Endothelial cell of umbilical vein (primary cell): ENCODE measurements at regions of chr12 and their contacts with region 1.

Region 1: GRCh38 chr12:123232807-123233543 is at the starts of genes MPHOSPH9 and MTRFR:
- DNase-seq: peak; percentile 100
- H3K4me3 ChIP-seq: peak within 1 kb of the TSS; percentile 65 to 100 (median 99)
- H3K27ac ChIP-seq: peak within 1 kb of the TSS; percentile 86
- H3K4me1 ChIP-seq: peaks cover 21% of the 10 kb centered on the region
- H3K27me3 ChIP-seq: no peaks in the 10 kb centered on the region
- CTCF ChIP-seq: no peak
- POLR2A ChIP-seq: peak; percentile 99
- total RNA-seq, gene MPHOSPH9: 42.4 and 55.6 TPM in 2 replicates
- total RNA-seq, gene MTRFR: 12.0 and 14.4 TPM in 2 replicates

Region 2: GRCh38 chr12:122752464-122753318 is 480.3 kb before region 1 on chr12 and contains the start of gene DENR:
- CTCF ChIA-PET with region 1: no interaction called
- POLR2A ChIA-PET with region 1: no interaction called
- dilution Hi-C with region 1: no loop called
- intact Hi-C with region 1: loop called (anchors 2 kb)
- DNase-seq: peak; percentile 98
- H3K4me3 ChIP-seq: peak within 1 kb of the TSS; percentile 66 to 87 (median 77)
- H3K27ac ChIP-seq: peak within 1 kb of the TSS; percentile 74
- H3K4me1 ChIP-seq: peaks cover 11% of the 10 kb centered on the region
- H3K27me3 ChIP-seq: no peaks in the 10 kb centered on the region
- CTCF ChIP-seq: peak; percentile 87 to 90
- POLR2A ChIP-seq: peak; percentile 98
- total RNA-seq, gene DENR: 66.5 and 70.3 TPM in 2 replicates

Region 3: GRCh38 chr12:122865268-122866231 is 367.4 kb before region 1 on chr12:
- CTCF ChIA-PET with region 1: interaction called, 22 read pairs
- POLR2A ChIA-PET with region 1: interaction called, 5 read pairs
- dilution Hi-C with region 1: no loop called
- intact Hi-C with region 1: loop called (anchors 5 kb)
- DNase-seq: peak; percentile 40
- H3K4me3 ChIP-seq: no peak overlapping the region
- H3K27ac ChIP-seq: no peak overlapping the region
- H3K4me1 ChIP-seq: peaks cover 4% of the 10 kb centered on the region
- H3K27me3 ChIP-seq: no peaks in the 10 kb centered on the region
- CTCF ChIP-seq: peak; percentile 54 to 73
- POLR2A ChIP-seq: no peak

Region 4: GRCh38 chr12:122951979-122952892 is 280.7 kb before region 1 on chr12:
- CTCF ChIA-PET with region 1: interaction called, 19 read pairs
- POLR2A ChIA-PET with region 1: interaction called, 6 read pairs
- dilution Hi-C with region 1: no loop called
- intact Hi-C with region 1: loop called (anchors 2 kb)
- DNase-seq: peak; percentile 72
- H3K4me3 ChIP-seq: no peak overlapping the region
- H3K27ac ChIP-seq: peak overlapping the region; percentile 51
- H3K4me1 ChIP-seq: peaks cover 18% of the 10 kb centered on the region
- H3K27me3 ChIP-seq: no peaks in the 10 kb centered on the region
- CTCF ChIP-seq: peak; percentile 91 to 92
- POLR2A ChIP-seq: no peak

Region 5: DNA sequence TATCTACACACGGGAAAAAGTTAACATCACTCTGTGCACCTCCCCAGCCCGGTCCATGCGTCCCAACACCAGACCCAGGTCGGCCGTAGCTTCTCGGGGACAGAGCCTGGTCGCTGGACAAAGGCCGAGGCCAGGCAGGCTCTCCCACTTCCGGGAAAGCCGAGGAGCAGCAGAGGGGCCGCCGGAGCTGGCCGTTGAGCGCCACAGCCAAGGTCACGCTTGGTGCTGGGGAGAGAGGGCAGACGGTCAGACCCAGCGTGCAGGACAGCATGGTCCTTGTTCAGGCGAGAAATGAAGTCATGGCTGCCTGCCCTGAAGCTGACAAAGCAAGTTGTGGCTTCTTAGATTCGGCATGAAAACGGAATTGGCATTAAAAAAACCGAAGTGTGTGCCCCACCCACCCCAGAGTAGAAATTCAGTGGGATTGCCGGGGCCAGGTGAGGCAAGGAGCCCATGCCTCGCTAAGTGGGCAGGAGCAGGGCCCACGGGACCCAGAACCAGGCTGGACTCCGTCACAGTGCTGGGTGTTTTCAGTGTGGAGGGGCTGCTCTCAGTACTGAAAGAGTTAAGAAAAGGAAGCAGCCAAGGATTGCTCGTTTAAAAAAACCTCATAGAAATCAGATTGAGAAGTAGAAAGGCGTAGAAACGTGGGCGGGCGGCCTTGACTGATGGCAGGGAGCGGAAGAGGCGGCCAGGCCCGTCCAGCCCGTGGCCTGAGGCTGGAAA is 248.2 kb before region 1 on chr12:
- CTCF ChIA-PET with region 1: interaction called, 21 read pairs
- POLR2A ChIA-PET with region 1: interaction called, 7 read pairs
- dilution Hi-C with region 1: no loop called
- intact Hi-C with region 1: no loop called
- DNase-seq: no peak
- H3K4me3 ChIP-seq: no peak overlapping the region
- H3K27ac ChIP-seq: no peak overlapping the region
- H3K4me1 ChIP-seq: peaks cover 30% of the 10 kb centered on the region
- H3K27me3 ChIP-seq: no peaks in the 10 kb centered on the region
- CTCF ChIP-seq: no peak
- POLR2A ChIP-seq: no peak

Region 6: DNA sequence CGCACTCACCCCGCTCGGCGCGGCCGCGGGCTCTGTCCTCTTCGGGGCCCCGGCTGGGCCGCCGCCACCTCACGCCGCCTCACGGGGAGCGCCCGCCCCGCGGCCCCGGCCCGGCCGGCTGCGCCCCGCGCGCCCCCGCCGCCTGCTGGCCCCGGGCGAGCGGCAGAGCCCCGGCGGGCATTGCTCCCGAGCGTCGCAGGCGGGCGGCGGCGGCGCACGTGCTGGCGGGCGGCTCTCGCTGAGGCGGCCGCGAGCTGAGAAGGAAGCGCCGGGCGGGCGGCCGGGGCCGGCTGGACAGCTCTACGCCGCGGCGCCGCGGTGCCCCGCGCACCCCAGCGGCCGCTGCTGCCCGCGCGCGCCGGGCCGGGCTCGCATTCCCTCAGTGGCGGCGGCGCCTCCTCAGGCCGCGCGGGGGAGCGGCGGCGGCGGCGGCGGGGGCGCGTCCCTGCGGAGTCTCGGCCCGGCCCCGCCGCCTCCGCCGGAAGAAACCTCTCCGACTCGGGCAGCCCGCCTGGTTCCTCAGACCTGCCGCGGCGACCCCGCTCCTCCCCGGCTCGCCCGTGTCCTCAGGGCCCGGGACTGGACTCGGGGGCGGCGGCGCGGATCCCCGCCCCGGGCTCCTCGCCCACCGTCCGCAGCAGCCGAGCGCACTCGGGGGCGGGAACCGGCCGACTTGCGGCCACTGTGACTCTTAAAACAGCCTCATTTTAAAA is 82.1 kb before region 1 on chr12 and contains the start of gene PITPNM2:
- CTCF ChIA-PET with region 1: interaction called, 7 read pairs
- POLR2A ChIA-PET with region 1: interaction called, 5 read pairs
- dilution Hi-C with region 1: no loop called
- intact Hi-C with region 1: loop called (anchors 5 kb)
- DNase-seq: peak; percentile 41
- H3K4me3 ChIP-seq: peak within 1 kb of the TSS; percentile 61 to 72 (median 66)
- H3K27ac ChIP-seq: no peak within 1 kb of the TSS
- H3K4me1 ChIP-seq: peaks cover 14% of the 10 kb centered on the region
- H3K27me3 ChIP-seq: no peaks in the 10 kb centered on the region
- CTCF ChIP-seq: no peak
- POLR2A ChIP-seq: no peak
- total RNA-seq, gene PITPNM2: 15.9 and 21.4 TPM in 2 replicates

Region 7: GRCh38 chr12:123278101-123278627 is 45.2 kb after region 1 on chr12:
- CTCF ChIA-PET with region 1: interaction called, 5 read pairs
- POLR2A ChIA-PET with region 1: interaction called, 12 read pairs
- dilution Hi-C with region 1: no loop called
- intact Hi-C with region 1: no loop called
- DNase-seq: peak; percentile 87
- H3K4me3 ChIP-seq: peak overlapping the region in 1 of 3 experiments; percentile 28
- H3K27ac ChIP-seq: peak overlapping the region; percentile 68
- H3K4me1 ChIP-seq: peaks cover 11% of the 10 kb centered on the region
- H3K27me3 ChIP-seq: no peaks in the 10 kb centered on the region
- CTCF ChIP-seq: no peak
- POLR2A ChIP-seq: no peak

Region 8: GRCh38 chr12:123346946-123347345 is 114.0 kb after region 1 on chr12:
- CTCF ChIA-PET with region 1: no interaction called
- POLR2A ChIA-PET with region 1: no interaction called
- dilution Hi-C with region 1: no loop called
- intact Hi-C with region 1: no loop called
- DNase-seq: no peak
- H3K4me3 ChIP-seq: no peak overlapping the region
- H3K27ac ChIP-seq: no peak overlapping the region
- H3K4me1 ChIP-seq: no peaks in the 10 kb centered on the region
- H3K27me3 ChIP-seq: no peaks in the 10 kb centered on the region
- CTCF ChIP-seq: no peak
- POLR2A ChIP-seq: no peak